HCT116 (cell line): ENCODE measurements at regions of chr1 and their contacts with region 1.

Region 1: GRCh38 chr1:190436615-190437014 is 41.0 kb downstream of the BRINP3 start:
- DNase-seq: peak; percentile 36
- ATAC-seq: peak; percentile 75
- H3K4me3 ChIP-seq: no peak overlapping the region
- H3K27ac ChIP-seq: no peak overlapping the region
- H3K4me1 ChIP-seq: no peaks in the 10 kb centered on the region
- H3K27me3 ChIP-seq: no peaks in the 10 kb centered on the region
- CTCF ChIP-seq: peak; percentile 41 to 53 (median 52); a peak in 4 of 6 replicates
- POLR2A ChIP-seq: no peak
- RAD21 ChIP-seq: peak; percentile 73

Region 2: DNA sequence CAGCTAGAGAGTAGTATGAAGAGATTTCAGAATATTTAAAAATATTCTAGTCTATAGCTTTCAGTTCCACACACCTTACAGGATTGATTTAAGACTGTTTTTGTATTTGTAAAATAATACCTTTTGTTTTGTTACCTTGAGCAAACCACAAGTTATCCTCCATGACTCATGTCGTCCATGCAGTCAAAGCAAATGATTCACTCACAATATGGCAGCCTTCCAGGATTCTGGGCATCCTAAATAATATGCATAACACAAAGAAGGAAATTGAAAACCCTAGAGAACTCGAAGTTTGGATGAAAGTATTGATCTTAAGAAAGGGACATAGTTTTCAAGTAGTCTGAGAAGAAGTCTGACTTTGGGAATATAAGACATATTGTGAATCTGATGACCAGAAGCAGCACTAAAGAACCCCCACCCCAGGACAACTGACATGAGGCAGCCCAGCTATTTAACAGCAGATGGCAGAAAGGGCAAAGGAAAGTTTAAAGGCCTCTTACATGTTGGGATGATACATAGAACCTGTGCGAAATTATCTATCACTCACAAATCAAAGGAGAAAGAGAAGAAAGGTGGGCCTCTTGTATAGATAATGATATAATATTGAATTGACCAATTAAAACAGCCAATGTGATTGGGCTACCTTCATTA is 816.8 kb before region 1 on chr1:
- CTCF ChIA-PET with region 1: no interaction called
- POLR2A ChIA-PET with region 1: no interaction called
- RAD21 ChIA-PET with region 1: no interaction called
- intact Hi-C with region 1: loop called (anchors 10 kb)
- DNase-seq: peak; percentile 91
- ATAC-seq: peak; percentile 82
- H3K4me3 ChIP-seq: no peak overlapping the region
- H3K27ac ChIP-seq: no peak overlapping the region
- H3K4me1 ChIP-seq: peaks cover 8 to 17% of the 10 kb centered on the region in 2 experiments; a peak in 3 of 4 replicates
- H3K27me3 ChIP-seq: no peaks in the 10 kb centered on the region
- CTCF ChIP-seq: peak in 2 of 3 experiments; percentile 27 to 33; a peak in 3 of 6 replicates
- POLR2A ChIP-seq: no peak
- RAD21 ChIP-seq: peak; percentile 63

Region 3: DNA sequence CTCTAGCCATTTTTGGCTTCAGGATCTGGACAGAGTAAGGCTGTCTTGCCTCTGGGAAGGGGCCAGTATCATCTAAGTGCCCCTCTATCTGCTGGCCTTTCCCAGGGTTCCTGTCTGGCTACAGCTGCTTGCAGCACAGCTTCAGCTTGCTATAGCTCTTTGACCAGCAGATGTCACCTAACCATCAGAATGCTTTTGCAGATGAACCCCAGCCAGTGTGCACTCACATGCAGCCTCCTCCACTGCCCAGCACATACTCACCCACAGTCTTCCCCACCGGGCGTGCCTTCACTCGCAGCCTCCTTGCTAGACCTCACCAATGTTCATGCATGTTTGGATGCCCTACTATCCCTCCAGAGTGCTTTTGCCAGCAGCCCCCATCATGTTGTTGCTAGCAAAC is 727.9 kb before region 1 on chr1:
- CTCF ChIA-PET with region 1: interaction called, 13 read pairs
- POLR2A ChIA-PET with region 1: no interaction called
- RAD21 ChIA-PET with region 1: interaction called, 3 read pairs
- intact Hi-C with region 1: loop called (anchors 2 kb)
- DNase-seq: peak; percentile 7
- ATAC-seq: peak; percentile 88
- H3K4me3 ChIP-seq: no peak overlapping the region
- H3K27ac ChIP-seq: no peak overlapping the region
- H3K4me1 ChIP-seq: no peaks in the 10 kb centered on the region
- H3K27me3 ChIP-seq: no peaks in the 10 kb centered on the region
- CTCF ChIP-seq: peak; percentile 18 to 40 (median 37); a peak in 4 of 6 replicates
- POLR2A ChIP-seq: no peak
- RAD21 ChIP-seq: peak; percentile 63

Region 4: GRCh38 chr1:190391582-190391981 is 45.0 kb before region 1 on chr1:
- CTCF ChIA-PET with region 1: no interaction called
- POLR2A ChIA-PET with region 1: no interaction called
- RAD21 ChIA-PET with region 1: no interaction called
- intact Hi-C with region 1: no loop called
- DNase-seq: no peak
- ATAC-seq: no peak
- H3K4me3 ChIP-seq: no peak overlapping the region
- H3K27ac ChIP-seq: no peak overlapping the region
- H3K4me1 ChIP-seq: no peaks in the 10 kb centered on the region
- H3K27me3 ChIP-seq: no peaks in the 10 kb centered on the region
- CTCF ChIP-seq: no peak
- POLR2A ChIP-seq: no peak
- RAD21 ChIP-seq: no peak